ENCODE measurements at regions of chr1 and their contacts with region 1.

Region 1: DNA sequence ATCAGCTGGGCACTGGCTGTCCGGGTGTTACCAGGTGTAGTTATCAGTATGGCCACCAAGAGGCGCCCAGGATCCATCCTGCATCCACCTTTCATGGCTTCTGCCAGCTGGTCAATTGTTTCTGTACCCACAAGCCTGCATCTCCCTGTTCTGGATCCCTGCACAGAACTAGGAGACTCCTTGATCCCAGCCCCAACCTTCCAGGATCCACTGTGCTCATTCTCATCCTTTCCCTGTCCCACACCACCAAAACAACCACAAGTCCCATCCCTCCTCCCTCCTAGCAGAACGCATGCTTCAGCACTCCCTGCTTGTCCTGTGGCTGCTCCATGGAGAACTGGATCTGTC is 27.2 kb upstream of the FOXE3 start:
- DNase-seq: peak; percentile 32 to 57 (median 48)
- H3K4me3 ChIP-seq: no peak overlapping the region
- H3K27ac ChIP-seq: no peak overlapping the region
- H3K4me1 ChIP-seq: no peaks in the 10 kb centered on the region
- H3K27me3 ChIP-seq: peaks cover 0 to 4% (median 0%) of the 10 kb centered on the region in 5 experiments

Region 2: DNA sequence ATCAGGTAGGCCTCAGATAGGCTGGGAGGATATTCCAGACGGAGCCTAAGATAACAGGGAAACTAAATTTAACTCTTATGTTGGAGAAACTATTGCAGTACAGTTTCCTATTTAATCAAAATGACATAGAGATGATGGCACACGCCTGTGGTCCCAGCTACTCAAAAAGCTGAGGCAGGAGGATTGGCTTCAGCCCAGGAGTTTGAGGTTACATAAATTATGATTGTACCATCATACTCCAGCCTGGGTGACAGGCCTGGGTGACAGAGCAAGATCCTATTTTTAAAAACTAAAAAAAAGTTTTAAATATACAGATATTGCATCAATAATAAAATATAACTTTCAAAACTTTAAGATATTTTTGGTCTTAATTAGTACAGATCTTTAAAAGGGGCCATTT is 131.6 kb before region 1 on chr1:
- CTCF ChIA-PET with region 1: no interaction called
- POLR2A ChIA-PET with region 1: no interaction called
- DNase-seq: peak; percentile 52 to 85 (median 84)
- H3K4me3 ChIP-seq: no peak overlapping the region
- H3K27ac ChIP-seq: peak overlapping the region in 1 of 2 experiments; percentile 27
- H3K4me1 ChIP-seq: peaks cover 0 to 19% (median 2%) of the 10 kb centered on the region in 4 experiments
- H3K27me3 ChIP-seq: no peaks in the 10 kb centered on the region

Region 3: DNA sequence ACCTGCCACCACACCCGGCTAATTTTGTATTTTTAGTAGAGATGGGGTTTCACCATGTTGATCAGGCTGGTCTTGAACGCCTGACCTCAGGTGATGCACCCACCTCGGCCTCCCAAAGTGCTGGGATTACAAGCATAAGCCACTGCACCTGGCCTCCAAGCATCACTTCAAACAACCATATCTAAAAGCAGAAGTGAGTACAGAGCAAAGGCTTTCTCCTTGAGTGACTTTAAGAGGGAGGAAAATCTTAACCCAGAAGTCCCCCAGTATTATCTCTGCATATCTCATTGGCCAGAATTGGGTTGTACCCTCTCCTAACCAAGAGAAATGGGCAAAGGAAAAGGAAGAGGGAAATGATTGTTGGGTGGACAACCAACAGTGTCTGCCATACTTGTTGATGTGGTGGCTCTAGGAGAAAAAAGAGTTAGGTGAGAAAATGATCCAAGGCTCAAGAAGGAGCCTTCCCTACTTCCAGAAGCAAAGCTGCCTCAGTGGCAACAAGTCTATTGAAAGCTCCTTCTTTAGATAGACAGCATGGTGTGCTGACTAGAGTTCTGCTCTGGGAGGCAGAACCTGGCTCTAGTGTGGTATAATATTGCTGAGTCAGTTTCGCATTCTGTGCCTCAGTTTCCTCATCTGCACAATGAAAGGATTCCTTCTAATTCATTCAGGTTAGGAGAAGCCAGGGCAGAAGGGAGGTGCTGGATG is 10.4 kb after region 1 on chr1:
- CTCF ChIA-PET with region 1: interaction called, 25 read pairs
- POLR2A ChIA-PET with region 1: no interaction called
- DNase-seq: no peak
- H3K4me3 ChIP-seq: no peak overlapping the region
- H3K27ac ChIP-seq: no peak overlapping the region
- H3K4me1 ChIP-seq: no peaks in the 10 kb centered on the region
- H3K27me3 ChIP-seq: peaks cover 0 to 19% (median 5%) of the 10 kb centered on the region in 5 experiments

Region 4: DNA sequence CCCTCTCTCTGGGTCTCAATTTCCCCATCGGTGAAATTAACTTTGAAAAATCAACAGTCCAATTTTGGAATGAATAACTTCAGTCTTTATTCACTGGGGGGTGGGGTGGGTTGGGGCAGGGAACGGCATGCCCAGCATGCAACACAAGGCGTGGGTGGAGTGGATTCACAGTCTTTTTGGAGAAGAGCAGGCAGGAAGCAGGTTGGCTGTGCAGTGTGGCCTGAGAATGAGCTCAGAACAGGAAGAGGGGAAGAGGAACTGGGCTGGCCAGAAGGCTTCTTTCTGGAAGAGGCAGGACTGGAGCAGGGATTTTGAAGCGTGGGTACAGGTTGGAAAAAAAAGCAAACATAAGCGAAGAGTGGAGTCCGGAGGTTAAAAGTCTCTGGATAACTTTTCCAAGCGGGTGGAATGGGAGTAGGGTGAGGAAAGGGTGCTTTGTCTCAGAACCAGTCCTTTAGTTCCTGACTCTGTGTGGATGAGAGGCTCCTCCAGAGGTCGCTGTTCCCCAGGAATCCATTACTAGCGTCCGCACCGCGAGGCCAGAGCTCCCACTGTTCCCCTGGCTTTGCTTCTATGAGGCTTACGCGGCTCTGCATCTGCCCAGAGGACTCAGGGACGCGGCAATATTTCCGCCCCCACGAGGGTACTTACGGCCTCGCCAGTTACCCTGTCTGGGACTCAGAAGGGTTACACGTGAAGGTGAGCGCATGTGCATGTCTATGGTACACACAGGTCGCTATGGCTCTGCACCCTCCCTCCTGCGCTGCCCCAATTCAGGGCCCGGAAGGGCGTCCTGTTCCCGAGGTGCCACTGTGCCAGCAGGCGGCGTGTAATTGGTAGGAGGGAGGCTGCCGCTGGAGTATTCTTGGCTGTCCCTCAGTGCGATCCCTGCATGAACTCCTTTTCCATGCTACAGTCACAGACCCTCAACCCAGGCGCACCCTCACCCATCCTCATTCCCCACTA is 43.5 kb after region 1 on chr1:
- CTCF ChIA-PET with region 1: interaction called, 13 read pairs
- POLR2A ChIA-PET with region 1: no interaction called
- DNase-seq: peak; percentile 66 to 81 (median 77)
- H3K4me3 ChIP-seq: peak overlapping the region in 5 of 7 experiments; percentile 21 to 68 (median 47)
- H3K27ac ChIP-seq: no peak overlapping the region
- H3K4me1 ChIP-seq: peaks cover 6 to 48% (median 41%) of the 10 kb centered on the region in 4 experiments
- H3K27me3 ChIP-seq: peaks cover 15 to 71% (median 54%) of the 10 kb centered on the region in 5 experiments

Region 5: GRCh38 chr1:47725992-47726855 is 337.4 kb after region 1 on chr1:
- CTCF ChIA-PET with region 1: interaction called, 30 read pairs
- POLR2A ChIA-PET with region 1: interaction called, 3 read pairs
- DNase-seq: peak; percentile 78 to 86 (median 85)
- H3K4me3 ChIP-seq: peak overlapping the region in 3 of 7 experiments; percentile 22 to 32 (median 28)
- H3K27ac ChIP-seq: no peak overlapping the region
- H3K4me1 ChIP-seq: peaks cover 0 to 26% (median 10%) of the 10 kb centered on the region in 4 experiments
- H3K27me3 ChIP-seq: peaks cover 0 to 35% (median 22%) of the 10 kb centered on the region in 5 experiments

Measured in common myeloid progenitor, CD34-positive (primary cell).